ENCODE measurements at regions of chr11 and their contacts with region 1.

Region 1: GRCh38 chr11:61102667-61103571 is 630 bp downstream of the CD5 start:
- DNase-seq: no peak
- H3K4me3 Mint-ChIP-seq: no peak overlapping the region
- H3K27ac Mint-ChIP-seq: no peak overlapping the region
- H3K4me1 Mint-ChIP-seq: peaks cover 31% of the 10 kb centered on the region
- H3K27me3 Mint-ChIP-seq: no peaks in the 10 kb centered on the region

Region 2: GRCh38 chr11:61091373-61092279 is 11.3 kb before region 1 on chr11:
- intact Hi-C with region 1: loop called (anchors 1 kb)
- DNase-seq: no peak
- H3K4me3 Mint-ChIP-seq: peak overlapping the region; percentile 94
- H3K27ac Mint-ChIP-seq: peak overlapping the region; percentile 99
- H3K4me1 Mint-ChIP-seq: peaks cover 67% of the 10 kb centered on the region
- H3K27me3 Mint-ChIP-seq: no peaks in the 10 kb centered on the region

Measured in activated T-helper 2 cell treated with anti-CD3 and anti-CD28 coated beads, Interferon-gamma antibody, Interleukin-2, Interleukin-4, amounts not matched to agents 10 μg/mL and 5 μg/mL and 100 μg/mL, durations not matched to agents 14 hours and 24 hours and 36 hours (primary cell).